Activated naive CD8-positive, alpha-beta T cell treated with anti-CD3 and anti-CD28 coated beads, Interleukin-2, amount 10 ng/mL, durations not matched to agents 7 days and 5 days (primary cell): ENCODE measurements at regions of chr3 and their contacts with region 1.

Region 1: GRCh38 chr3:195542698-195543499 is at the start of gene PPP1R2:
- DNase-seq: peak; percentile 98
- ATAC-seq: peak; percentile 68
- H3K4me3 Mint-ChIP-seq: peak within 1 kb of the TSS; percentile 84
- H3K27ac Mint-ChIP-seq: peak within 1 kb of the TSS; percentile 90
- H3K4me1 Mint-ChIP-seq: peaks cover 57% of the 10 kb centered on the region
- H3K27me3 Mint-ChIP-seq: no peaks in the 10 kb centered on the region
- total RNA-seq, gene PPP1R2: 85.3 to 93.6 TPM

Region 2: DNA sequence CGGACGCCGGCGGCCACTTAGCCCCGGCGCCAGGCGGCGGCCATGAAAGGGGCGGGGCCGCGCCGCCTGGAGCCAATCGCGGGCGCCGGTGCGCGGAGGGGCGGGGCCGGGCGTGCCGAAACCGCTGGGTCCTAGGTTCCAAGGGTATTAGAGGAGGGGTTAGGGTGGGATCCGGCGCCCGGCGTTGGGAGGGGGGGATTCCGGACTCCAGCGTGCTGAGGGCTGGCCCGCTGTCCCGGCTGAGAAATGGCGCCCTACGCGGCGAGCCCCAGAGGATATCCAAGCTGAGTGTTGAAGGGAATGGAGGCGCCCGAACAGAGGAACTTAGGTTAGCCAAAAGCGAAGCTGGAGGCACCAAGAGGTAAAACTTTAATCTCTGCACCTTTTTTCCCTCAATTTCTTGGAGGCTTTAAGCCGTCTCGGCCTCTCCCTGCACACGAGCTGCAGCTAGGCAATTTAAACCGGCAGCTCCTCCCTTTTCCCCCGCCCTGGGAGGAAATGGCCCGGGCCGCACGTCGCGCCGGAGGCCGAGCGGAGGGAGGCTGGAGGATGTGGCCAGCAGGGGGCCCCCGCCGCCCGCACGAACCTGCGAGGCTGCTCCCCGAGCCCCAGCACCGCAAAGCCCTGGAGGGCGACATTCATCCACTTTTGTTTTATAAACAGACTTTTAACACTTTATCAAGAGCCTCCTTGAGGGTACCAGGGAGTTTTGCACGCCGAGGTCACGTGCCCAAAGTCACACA is 271.6 kb before region 1 on chr3 and contains the start of gene XXYLT1:
- POLR2A ChIA-PET with region 1: interaction called, 20 read pairs
- DNase-seq: peak; percentile 96
- ATAC-seq: peak; percentile 81
- H3K4me3 Mint-ChIP-seq: peak within 1 kb of the TSS; percentile 90
- H3K27ac Mint-ChIP-seq: peak within 1 kb of the TSS; percentile 87
- H3K4me1 Mint-ChIP-seq: peaks cover 20% of the 10 kb centered on the region
- H3K27me3 Mint-ChIP-seq: no peaks in the 10 kb centered on the region
- total RNA-seq, gene XXYLT1: 6.8 to 8.3 TPM

Region 3: GRCh38 chr3:195442573-195443390 is 100.1 kb before region 1 on chr3 and contains the start of gene ACAP2:
- POLR2A ChIA-PET with region 1: interaction called, 12 read pairs
- DNase-seq: peak; percentile 100
- ATAC-seq: peak; percentile 90
- H3K4me3 Mint-ChIP-seq: peak within 1 kb of the TSS; percentile 87
- H3K27ac Mint-ChIP-seq: peak within 1 kb of the TSS; percentile 93
- H3K4me1 Mint-ChIP-seq: peaks cover 29% of the 10 kb centered on the region
- H3K27me3 Mint-ChIP-seq: no peaks in the 10 kb centered on the region
- total RNA-seq, gene ACAP2: 68.3 to 73.4 TPM

Region 4: GRCh38 chr3:195475614-195476013 is 67.3 kb before region 1 on chr3:
- POLR2A ChIA-PET with region 1: no interaction called
- DNase-seq: no peak
- ATAC-seq: no peak
- H3K4me3 Mint-ChIP-seq: no peak overlapping the region
- H3K27ac Mint-ChIP-seq: no peak overlapping the region
- H3K4me1 Mint-ChIP-seq: no peaks in the 10 kb centered on the region
- H3K27me3 Mint-ChIP-seq: peaks cover 17% of the 10 kb centered on the region